ENCODE measurements at regions of chr19 and their contacts with region 1.

Region 1: DNA sequence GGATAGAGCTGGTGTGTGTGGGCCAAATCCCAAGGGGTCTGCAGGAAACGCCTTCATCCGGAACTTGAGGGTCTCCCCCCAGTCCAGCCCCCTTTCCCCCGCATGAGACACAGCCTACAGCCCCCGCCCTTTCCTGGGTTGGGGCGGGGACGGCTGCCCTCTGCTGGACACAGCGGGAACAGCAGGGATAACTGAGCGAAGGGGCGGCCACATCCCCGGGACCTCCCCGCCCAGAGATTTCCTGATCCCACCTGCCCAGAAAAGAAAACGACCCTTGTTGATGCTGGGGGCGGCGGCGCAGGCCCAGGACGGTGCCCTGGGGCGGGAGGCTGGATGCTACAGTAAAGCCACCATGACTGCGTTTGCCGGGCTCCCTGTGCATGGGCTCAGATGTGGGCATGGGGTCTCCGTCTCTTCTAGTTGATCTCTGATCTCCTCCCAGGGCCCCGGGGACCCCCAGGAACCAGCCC is 14.2 kb downstream of the ONECUT3 start:
- DNase-seq: peak; percentile 48
- H3K4me3 Mint-ChIP-seq: no peak overlapping the region
- H3K27ac Mint-ChIP-seq: no peak overlapping the region
- H3K4me1 Mint-ChIP-seq: peaks cover 4% of the 10 kb centered on the region
- H3K27me3 Mint-ChIP-seq: peaks cover 31% of the 10 kb centered on the region
- CTCF ChIP-seq: peak; percentile 94

Region 2: GRCh38 chr19:1646149-1646548 is 121.3 kb before region 1 on chr19:
- CTCF ChIA-PET with region 1: no interaction called
- POLR2A ChIA-PET with region 1: no interaction called
- intact Hi-C with region 1: no loop called
- DNase-seq: no peak
- H3K4me3 Mint-ChIP-seq: no peak overlapping the region
- H3K27ac Mint-ChIP-seq: no peak overlapping the region
- H3K4me1 Mint-ChIP-seq: no peaks in the 10 kb centered on the region
- H3K27me3 Mint-ChIP-seq: no peaks in the 10 kb centered on the region
- CTCF ChIP-seq: no peak

Region 3: GRCh38 chr19:1691581-1692290 is 75.8 kb before region 1 on chr19:
- CTCF ChIA-PET with region 1: interaction called, 7 read pairs
- POLR2A ChIA-PET with region 1: interaction called, 3 read pairs
- intact Hi-C with region 1: loop called (anchors 2 kb)
- DNase-seq: no peak
- H3K4me3 Mint-ChIP-seq: no peak overlapping the region
- H3K27ac Mint-ChIP-seq: no peak overlapping the region
- H3K4me1 Mint-ChIP-seq: peaks cover 5% of the 10 kb centered on the region
- H3K27me3 Mint-ChIP-seq: peaks cover 23% of the 10 kb centered on the region
- CTCF ChIP-seq: no peak

Region 4: GRCh38 chr19:1707240-1707639 is 60.3 kb before region 1 on chr19:
- CTCF ChIA-PET with region 1: no interaction called
- POLR2A ChIA-PET with region 1: no interaction called
- intact Hi-C with region 1: no loop called
- DNase-seq: no peak
- H3K4me3 Mint-ChIP-seq: no peak overlapping the region
- H3K27ac Mint-ChIP-seq: no peak overlapping the region
- H3K4me1 Mint-ChIP-seq: no peaks in the 10 kb centered on the region
- H3K27me3 Mint-ChIP-seq: peaks cover 5% of the 10 kb centered on the region
- CTCF ChIP-seq: no peak

Region 5: DNA sequence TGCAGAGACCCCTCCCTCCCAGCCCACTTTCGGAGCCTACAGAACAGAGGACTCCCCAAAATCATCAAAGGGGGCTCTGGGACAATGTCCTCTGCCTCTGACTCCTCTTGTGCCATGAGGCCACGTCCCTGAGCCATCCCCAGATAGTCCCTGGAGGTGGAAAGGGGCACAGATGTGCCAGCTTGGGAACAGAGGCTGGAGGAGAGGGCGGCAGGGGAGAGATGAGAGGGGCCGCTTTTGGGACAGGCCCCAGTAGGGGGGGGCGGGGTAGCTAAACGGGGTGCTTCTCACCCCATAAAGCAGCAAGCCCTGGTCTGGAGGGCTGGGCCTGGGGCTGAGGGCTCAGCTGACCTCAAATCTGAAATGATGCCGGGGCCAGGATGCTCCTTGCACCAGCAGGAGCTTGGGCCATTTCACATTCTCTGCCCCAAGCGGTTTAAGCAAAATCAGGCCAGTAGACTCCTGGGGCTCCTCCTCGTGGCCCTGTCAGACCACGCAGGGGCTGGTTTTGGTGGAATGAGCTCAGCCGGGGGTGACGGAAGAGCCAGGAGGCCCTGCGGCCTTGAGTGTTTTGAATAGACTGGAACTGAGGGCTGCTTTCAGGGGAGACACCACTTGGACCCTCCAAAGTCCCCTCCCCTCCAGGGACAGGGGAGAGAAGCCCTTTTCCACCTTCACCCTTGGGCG is 12.9 kb after region 1 on chr19:
- CTCF ChIA-PET with region 1: interaction called, 23 read pairs
- POLR2A ChIA-PET with region 1: interaction called, 8 read pairs
- intact Hi-C with region 1: no loop called
- DNase-seq: no peak
- H3K4me3 Mint-ChIP-seq: no peak overlapping the region
- H3K27ac Mint-ChIP-seq: no peak overlapping the region
- H3K4me1 Mint-ChIP-seq: peaks cover 5% of the 10 kb centered on the region
- H3K27me3 Mint-ChIP-seq: no peaks in the 10 kb centered on the region
- CTCF ChIP-seq: no peak